WTC11 (cell line): ENCODE measurements at regions of chr3 and their contacts with region 1.

Region 1: DNA sequence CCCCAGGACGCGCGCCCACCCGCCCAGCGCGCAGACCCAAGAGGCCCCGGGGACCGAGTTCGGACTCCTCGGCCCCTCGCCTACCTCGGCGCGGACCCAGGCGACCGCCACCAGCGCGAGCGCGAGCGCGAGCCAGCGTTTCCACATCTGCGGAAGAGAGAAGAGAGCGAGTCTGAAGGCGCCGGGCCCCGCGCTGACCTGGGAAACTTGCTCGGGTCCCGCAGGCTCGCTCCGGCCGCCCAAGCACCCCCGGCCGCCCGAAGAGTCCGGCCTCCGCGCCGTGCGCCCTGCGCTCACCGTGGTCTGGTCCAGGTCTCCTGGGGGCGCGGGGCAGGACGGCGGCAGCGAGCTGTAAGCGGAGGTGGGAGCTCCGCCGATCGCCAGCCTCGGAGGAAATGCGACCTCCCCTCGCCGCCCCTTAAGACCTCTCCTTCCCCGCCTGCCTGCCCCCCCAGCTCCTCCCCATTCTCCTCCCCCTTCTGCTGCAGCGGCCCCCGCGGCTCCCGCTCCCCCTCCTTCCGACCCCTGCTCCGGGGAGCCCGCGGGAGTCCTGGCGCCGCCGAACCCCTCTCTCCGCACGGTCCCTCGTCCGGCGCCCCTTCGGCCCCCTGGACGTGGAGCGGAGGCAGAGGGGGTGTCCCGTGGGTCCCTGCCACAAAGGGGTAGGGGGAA is at the start of gene FSTL1:
- DNase-seq: peak; percentile 79
- ATAC-seq: peak; percentile 70
- H3K4me3 Mint-ChIP-seq: peak within 1 kb of the TSS; percentile 90
- H3K27ac Mint-ChIP-seq: peak within 1 kb of the TSS; percentile 73
- H3K4me1 Mint-ChIP-seq: peaks cover 52% of the 10 kb centered on the region
- H3K27me3 Mint-ChIP-seq: no peaks in the 10 kb centered on the region; the same call in 1 of the 2 replicates
- CTCF ChIP-seq: no peak
- total RNA-seq, gene FSTL1: 271 to 286 TPM (median 272 TPM) in 3 replicates

Region 2: DNA sequence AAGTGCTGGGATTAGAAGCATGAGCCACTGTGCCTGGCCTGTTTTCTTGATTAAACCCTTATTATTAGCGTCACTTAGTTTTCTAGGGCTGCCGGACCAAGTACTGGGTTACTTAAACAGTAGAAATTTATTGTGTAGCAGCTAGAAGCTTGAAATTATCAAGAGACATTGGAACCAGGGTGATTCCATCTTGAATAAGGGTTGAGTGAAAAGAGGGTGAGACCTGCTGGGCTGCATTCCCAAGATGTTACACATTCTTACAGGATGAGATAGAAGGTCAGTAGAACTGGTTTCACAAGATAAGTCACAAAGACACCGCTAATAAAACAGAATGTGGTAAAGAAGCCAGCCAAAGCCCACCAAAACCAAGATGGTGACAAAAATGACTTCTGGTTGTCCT is 18.7 kb after region 1 on chr3:
- CTCF ChIA-PET with region 1: no interaction called
- POLR2A ChIA-PET with region 1: interaction called, 15 read pairs
- DNase-seq: peak; percentile 25
- ATAC-seq: peak; percentile 82
- H3K4me3 Mint-ChIP-seq: no peak overlapping the region
- H3K27ac Mint-ChIP-seq: peak overlapping the region; percentile 77
- H3K4me1 Mint-ChIP-seq: peaks cover 44% of the 10 kb centered on the region
- H3K27me3 Mint-ChIP-seq: no peaks in the 10 kb centered on the region; the same call in 1 of the 2 replicates
- CTCF ChIP-seq: no peak

Region 3: DNA sequence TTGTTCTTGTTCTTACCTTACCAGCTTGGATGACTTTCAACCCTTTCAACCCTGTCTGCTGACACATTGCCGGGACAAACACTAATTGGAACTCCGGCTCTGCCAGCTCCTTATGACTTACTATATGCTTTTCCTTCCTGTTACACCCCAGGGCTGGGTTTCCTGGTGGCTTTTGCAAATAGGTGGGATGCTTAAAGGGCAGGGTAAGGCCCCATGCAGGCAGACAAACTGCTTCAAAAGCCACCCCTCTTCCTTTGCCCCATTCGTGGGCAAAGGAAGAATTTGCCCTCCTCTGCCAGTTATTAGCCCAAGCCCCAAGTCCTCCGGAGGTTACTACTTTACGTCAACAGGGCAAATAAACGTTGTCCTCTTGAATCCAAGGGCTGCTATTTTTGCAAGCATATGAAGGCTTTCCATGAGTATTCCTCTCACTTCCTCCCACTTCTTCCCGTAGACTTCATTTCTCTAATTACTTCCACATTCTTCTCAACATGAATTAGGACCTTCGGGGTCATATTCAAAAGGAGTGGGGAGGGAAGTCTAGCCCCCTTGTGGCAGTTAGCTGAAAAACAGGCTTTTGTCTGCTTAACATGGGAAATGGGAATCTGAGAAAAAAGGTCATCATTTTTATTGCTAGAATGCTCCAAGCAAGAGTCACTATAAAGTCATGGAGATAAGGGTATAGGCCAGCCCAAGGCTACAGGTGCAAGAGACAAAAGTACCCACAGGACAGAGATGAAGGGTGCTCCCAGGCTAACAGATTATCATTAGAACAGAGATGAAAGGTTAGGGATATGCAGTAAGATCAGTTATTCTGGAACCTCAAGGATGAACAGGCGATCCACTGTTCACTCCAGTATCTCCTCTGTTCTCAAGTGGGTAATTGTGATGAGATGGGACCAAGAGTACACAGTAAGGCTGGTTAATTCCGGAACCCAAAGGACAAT is 56.4 kb after region 1 on chr3:
- CTCF ChIA-PET with region 1: interaction called, 5 read pairs
- POLR2A ChIA-PET with region 1: interaction called, 14 read pairs
- DNase-seq: peak; percentile 39
- ATAC-seq: 0 out of 2 replicates have a peak, but pooled peaks have one; percentile 17
- H3K4me3 Mint-ChIP-seq: no peak overlapping the region
- H3K27ac Mint-ChIP-seq: no peak overlapping the region
- H3K4me1 Mint-ChIP-seq: peaks cover 26% of the 10 kb centered on the region
- H3K27me3 Mint-ChIP-seq: no peaks in the 10 kb centered on the region
- CTCF ChIP-seq: peak; percentile 52